BJ (cell line): ENCODE measurements at regions of chr9 and their contacts with region 1.

Region 1: GRCh38 chr9:87725900-87726709 is at the start of gene CTSL:
- DNase-seq: peak; percentile 52
- H3K4me3 ChIP-seq: peak within 1 kb of the TSS; percentile 77
- H3K27me3 ChIP-seq: no peaks in the 10 kb centered on the region
- CTCF ChIP-seq: peak; percentile 33
- polyA plus RNA-seq, gene CTSL: 146 and 200 TPM in 2 replicates

Region 2: DNA sequence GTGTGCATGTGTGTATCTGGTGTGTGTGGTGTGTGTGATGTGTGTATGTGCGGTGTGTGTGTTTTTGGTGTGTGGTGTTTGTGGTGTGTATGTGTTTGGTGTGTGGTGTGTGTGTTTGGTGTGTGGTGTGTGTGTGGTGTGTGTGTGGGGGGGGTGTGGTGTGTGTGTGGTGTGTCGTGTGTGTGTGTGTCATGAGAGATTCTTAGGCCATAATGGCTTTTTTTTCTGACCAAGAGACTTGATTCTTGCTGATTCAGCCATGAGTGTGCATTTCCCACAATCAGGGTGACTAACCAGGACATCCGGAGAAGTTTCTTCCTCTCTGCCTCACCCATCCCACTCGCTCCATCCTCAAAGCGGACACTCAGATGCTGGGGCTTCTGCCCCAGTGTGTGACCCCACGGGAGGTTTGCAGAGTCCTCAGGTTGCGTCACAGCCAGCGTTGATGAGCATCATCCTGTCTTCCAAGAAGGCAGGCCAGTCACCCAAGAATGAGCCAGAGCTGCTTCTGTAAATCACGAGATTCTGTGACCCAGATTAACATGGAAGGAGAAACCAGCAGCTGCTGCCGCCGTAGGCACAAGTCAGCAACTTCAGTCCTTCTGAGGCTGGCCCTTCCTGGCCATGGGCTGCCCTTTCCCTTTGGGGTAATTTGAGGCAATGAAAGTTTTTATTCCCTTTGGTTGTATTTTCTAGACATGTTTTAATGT is 12.7 kb before region 1 on chr9:
- CTCF ChIA-PET with region 1: interaction called, 21 read pairs
- POLR2A ChIA-PET with region 1: no interaction called
- DNase-seq: peak; percentile 97
- H3K4me3 ChIP-seq: no peak overlapping the region
- H3K27me3 ChIP-seq: no peaks in the 10 kb centered on the region
- CTCF ChIP-seq: peak; percentile 24; the same call in 1 of the 2 replicates

Region 3: DNA sequence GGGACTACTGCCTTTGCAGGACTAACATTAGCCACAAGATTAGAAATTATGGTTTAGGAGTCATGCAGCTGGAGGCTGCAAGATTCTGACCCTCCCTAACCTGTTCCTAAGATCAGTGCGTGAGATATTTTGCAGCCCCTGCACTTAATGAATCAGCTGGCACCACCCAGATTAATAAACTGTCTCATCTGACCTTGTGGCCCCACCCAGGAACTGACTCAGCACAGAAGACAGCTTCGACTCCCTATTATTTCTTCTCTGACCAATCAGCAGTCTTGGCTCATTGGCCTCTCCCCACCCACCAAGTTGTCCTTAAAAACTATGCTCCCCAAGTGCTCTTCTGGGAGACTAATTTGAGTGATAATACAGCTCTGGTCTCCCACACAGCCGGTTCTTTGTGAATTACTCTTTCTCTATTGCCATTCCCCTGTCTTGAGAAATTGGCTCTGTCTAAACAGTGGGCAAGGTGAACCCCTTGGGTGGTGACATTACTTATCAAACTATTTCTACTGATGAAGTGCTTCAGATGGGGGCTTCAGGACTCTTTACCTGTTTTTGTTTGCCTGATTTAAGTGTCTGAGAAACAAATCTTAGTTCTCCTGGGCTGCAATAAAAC is 16.8 kb after region 1 on chr9:
- CTCF ChIA-PET with region 1: no interaction called
- POLR2A ChIA-PET with region 1: no interaction called
- DNase-seq: no peak
- H3K4me3 ChIP-seq: no peak overlapping the region
- H3K27me3 ChIP-seq: no peaks in the 10 kb centered on the region
- CTCF ChIP-seq: no peak